Heart left ventricle (tissue), 16 donors: ENCODE measurements at regions of chr6 and their contacts with region 1.

Region 1: DNA sequence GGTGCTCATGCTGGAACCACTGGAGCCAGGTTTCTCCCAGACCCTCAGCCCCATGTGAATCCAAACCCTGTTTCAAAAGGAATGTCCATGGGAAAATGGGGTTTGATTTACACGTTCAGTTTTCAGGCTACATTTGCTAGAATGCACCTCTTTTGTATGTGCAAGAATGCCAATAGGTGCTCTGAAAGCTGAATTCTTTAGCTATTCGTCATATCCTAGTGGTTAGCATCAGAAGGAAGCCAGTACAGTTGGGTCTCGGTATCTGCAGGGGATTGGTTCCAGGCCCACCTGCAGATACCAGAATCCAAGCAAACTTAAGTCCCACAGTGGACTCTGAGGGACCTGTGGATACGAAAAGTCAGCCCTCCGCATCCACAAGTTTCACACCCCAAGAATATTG is 93.4 kb downstream of the UST start:
- DNase-seq: no peak
- ATAC-seq: no peak
- H3K4me3 ChIP-seq: no peak overlapping the region
- H3K27ac ChIP-seq: no peak overlapping the region
- H3K4me1 ChIP-seq: no peaks in the 10 kb centered on the region
- H3K27me3 ChIP-seq: no peaks in the 10 kb centered on the region
- CTCF ChIP-seq: no peak
- POLR2A ChIP-seq: no peak

Region 2: GRCh38 chr6:148559848-148560433 is 280.3 kb before region 1 on chr6:
- intact Hi-C with region 1: loop called in 1 of 10 experiments (anchors 5 kb)
- DNase-seq: peak; percentile 71 to 89 (median 76)
- ATAC-seq: peak; percentile 57 to 93 (median 86)
- H3K4me3 ChIP-seq: peak overlapping the region; percentile 37 to 67 (median 53)
- H3K27ac ChIP-seq: peak overlapping the region in 5 of 12 donors; percentile 25 to 65 (median 44)
- H3K4me1 ChIP-seq: peaks cover 0 to 22% (median 7%) of the 10 kb centered on the region in 12 donors
- H3K27me3 ChIP-seq: no peaks in the 10 kb centered on the region
- CTCF ChIP-seq: peak; percentile 93 to 99 (median 98)
- POLR2A ChIP-seq: no peak

Region 3: GRCh38 chr6:148869585-148869984 is 29.3 kb after region 1 on chr6:
- intact Hi-C with region 1: no loop called
- DNase-seq: no peak
- ATAC-seq: no peak
- H3K4me3 ChIP-seq: no peak overlapping the region
- H3K27ac ChIP-seq: peak overlapping the region in 1 of 12 donors; percentile 12
- H3K4me1 ChIP-seq: peaks cover 0 to 22% (median 3%) of the 10 kb centered on the region in 12 donors
- H3K27me3 ChIP-seq: no peaks in the 10 kb centered on the region
- CTCF ChIP-seq: no peak
- POLR2A ChIP-seq: no peak

Region 4: GRCh38 chr6:148885136-148885870 is 45.0 kb after region 1 on chr6:
- intact Hi-C with region 1: no loop called
- DNase-seq: no peak
- ATAC-seq: no peak
- H3K4me3 ChIP-seq: no peak overlapping the region
- H3K27ac ChIP-seq: peak overlapping the region in 1 of 12 donors; percentile 33
- H3K4me1 ChIP-seq: peaks cover 0 to 16% (median 2%) of the 10 kb centered on the region in 12 donors
- H3K27me3 ChIP-seq: no peaks in the 10 kb centered on the region
- CTCF ChIP-seq: no peak
- POLR2A ChIP-seq: no peak